Breast epithelium (tissue), 4 donors: ENCODE measurements at regions of chr10 and their contacts with region 1.

Region 1: GRCh38 chr10:102743588-102744373 is at the start of gene WBP1L:
- DNase-seq: peak; percentile 96 to 98
- H3K4me3 ChIP-seq: peak within 1 kb of the TSS; percentile 94 to 100 (median 95)
- H3K27ac ChIP-seq: peak within 1 kb of the TSS; percentile 92 to 95
- H3K4me1 ChIP-seq: no peaks in the 10 kb centered on the region
- H3K27me3 ChIP-seq: no peaks in the 10 kb centered on the region
- CTCF ChIP-seq: no peak
- POLR2A ChIP-seq: peak; percentile 80
- total RNA-seq, gene WBP1L: 114 to 174 (median 143) TPM

Region 2: DNA sequence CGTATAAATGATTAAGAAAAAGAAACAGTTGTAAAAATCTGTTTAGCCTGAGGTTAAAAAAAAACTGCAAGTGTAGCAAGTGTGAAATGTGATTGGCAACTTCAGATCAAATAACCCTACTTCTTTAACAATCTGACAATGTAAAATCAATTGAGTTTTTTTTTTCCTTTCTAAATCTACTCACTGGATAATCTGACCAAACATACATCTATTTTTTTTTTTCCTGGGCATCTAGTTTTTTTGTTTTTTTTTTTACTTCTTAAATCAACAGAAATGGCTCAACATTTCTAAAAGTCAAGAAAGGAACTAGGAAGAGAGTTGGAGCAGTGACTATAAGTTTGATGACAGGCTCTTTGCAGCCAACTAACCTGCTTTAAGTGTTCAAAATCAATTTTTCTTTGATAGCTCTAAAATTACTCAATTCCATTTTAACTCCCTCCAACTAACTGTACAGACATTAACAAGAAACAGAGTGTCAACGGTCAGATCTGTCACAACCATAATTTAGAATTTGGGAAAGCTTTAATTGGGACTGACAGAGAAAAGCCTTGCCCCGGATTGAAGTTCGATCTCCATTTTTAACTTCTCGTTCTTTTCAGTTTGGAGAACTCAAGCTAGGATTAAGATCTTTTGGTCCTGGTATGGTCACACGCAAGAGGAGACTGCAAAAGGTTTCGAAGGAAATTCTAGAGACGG is 30.8 kb before region 1 on chr10:
- intact Hi-C with region 1: loop called (anchors 1 kb)
- DNase-seq: no peak
- H3K4me3 ChIP-seq: peak overlapping the region; percentile 78 to 99 (median 92)
- H3K27ac ChIP-seq: peak overlapping the region; percentile 87 to 91
- H3K4me1 ChIP-seq: peaks cover 3 to 5% of the 10 kb centered on the region in 2 donors
- H3K27me3 ChIP-seq: no peaks in the 10 kb centered on the region
- CTCF ChIP-seq: no peak
- POLR2A ChIP-seq: no peak

Region 3: DNA sequence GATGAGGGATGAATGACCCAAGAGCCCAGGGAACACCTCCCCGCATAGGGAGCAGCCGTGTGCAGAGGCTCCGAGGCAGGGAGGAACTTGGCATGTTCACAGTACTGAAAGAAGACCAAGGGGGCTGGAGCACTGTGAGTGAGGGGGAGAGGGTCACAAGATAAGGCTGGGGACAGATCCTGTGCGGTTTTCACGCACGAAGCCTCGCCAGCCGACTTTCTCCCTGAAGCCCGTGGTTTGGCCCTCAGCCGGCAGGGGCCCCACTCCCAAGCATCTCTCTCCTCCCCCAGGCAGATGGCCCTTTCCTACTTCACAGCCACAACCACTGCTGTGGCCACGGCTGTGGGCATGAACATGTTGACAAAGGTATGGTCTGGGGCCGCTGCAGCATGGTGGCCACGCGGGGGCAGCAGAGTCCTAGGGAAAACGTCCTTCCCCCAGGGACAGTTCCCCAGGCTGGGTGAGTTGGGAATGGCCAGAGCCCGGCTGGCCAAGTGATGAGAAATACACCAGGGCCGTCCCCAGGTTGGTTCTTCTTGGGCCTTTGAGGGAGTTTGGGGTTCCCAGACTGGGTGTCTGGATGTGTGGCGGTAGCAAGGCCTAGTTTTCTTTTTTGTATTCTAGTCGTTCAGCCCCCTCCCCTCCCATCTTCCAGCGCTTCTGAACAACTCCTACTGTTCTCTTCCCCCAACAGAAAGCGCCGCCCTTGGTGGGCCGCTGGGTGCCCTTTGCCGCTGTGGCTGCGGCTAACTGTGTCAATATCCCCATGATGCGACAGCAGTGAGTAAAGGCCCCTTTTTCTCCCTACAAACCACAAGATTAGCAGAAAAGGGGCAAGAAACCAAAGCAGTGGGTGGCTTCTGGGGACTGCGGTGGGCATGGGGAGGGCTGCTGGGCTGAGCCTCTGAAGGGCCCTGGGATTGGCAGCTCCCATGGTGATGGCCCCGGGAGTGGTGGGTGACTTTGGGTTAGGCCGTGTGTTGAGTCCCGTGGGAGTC is 14.5 kb before region 1 on chr10:
- intact Hi-C with region 1: no loop called
- DNase-seq: peak; percentile 64 to 84
- H3K4me3 ChIP-seq: no peak overlapping the region
- H3K27ac ChIP-seq: no peak overlapping the region
- H3K4me1 ChIP-seq: no peaks in the 10 kb centered on the region
- H3K27me3 ChIP-seq: no peaks in the 10 kb centered on the region
- CTCF ChIP-seq: peak; percentile 70 to 91 (median 88)
- POLR2A ChIP-seq: no peak

Region 4: GRCh38 chr10:102808380-102808779 is 64.6 kb after region 1 on chr10:
- intact Hi-C with region 1: loop called (anchors 2 kb)
- DNase-seq: no peak
- H3K4me3 ChIP-seq: no peak overlapping the region
- H3K27ac ChIP-seq: no peak overlapping the region
- H3K4me1 ChIP-seq: no peaks in the 10 kb centered on the region
- H3K27me3 ChIP-seq: no peaks in the 10 kb centered on the region
- CTCF ChIP-seq: no peak
- POLR2A ChIP-seq: no peak